ENCODE measurements at regions of chr7 and their contacts with region 1.

Region 1: DNA sequence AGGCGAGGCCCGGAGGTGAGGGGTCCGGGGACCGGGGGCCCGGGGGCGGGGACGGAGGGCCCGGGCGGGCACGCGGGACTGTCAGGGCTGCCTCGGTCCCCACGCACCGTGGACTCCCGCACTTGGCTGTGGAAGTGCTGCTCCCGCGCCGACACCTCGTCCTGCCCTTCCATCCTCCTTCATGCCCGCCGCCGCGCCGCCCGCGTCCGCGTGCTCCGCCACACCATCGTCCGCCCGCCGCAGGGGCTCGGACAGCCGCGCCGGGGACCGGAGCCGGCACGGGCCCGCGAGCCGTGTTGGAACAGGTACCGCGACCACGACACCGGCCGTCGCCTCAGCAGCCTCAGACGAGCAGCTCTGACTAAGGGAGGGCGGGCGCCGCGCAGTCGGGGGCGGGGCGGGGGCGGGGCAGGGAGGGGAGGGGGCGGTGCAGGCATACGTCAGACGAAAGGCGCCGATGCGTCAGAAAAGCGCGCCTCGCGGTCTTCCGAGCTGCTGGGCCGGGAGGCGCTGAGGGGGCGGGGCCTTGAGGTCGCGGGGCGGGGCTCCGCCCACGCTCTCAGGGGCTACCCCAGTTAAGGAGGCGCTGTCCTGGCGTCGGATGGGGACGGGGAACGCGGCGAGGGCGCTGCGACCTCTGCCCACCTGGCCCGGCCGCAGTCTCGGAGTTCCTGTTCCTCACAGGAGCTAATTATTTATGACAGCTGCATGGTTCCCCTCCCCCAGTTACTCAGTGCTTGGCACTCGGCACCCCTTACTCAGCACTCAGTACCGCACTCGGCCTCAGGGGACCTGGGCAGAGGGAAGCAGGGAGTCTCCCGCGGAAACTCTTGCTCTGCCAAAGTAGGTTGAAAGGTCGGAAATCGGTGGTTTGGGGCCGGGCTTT is at the start of gene LMBR1:
- DNase-seq: peak; percentile 98
- ATAC-seq: peak; percentile 86
- H3K4me3 Mint-ChIP-seq: peak within 1 kb of the TSS; percentile 91
- H3K27ac Mint-ChIP-seq: peak within 1 kb of the TSS; percentile 88
- H3K4me1 Mint-ChIP-seq: peaks cover 42% of the 10 kb centered on the region
- H3K27me3 Mint-ChIP-seq: no peaks in the 10 kb centered on the region
- CTCF ChIP-seq: no peak
- total RNA-seq, gene LMBR1: 54.6 and 67.9 TPM in 2 replicates

Region 2: DNA sequence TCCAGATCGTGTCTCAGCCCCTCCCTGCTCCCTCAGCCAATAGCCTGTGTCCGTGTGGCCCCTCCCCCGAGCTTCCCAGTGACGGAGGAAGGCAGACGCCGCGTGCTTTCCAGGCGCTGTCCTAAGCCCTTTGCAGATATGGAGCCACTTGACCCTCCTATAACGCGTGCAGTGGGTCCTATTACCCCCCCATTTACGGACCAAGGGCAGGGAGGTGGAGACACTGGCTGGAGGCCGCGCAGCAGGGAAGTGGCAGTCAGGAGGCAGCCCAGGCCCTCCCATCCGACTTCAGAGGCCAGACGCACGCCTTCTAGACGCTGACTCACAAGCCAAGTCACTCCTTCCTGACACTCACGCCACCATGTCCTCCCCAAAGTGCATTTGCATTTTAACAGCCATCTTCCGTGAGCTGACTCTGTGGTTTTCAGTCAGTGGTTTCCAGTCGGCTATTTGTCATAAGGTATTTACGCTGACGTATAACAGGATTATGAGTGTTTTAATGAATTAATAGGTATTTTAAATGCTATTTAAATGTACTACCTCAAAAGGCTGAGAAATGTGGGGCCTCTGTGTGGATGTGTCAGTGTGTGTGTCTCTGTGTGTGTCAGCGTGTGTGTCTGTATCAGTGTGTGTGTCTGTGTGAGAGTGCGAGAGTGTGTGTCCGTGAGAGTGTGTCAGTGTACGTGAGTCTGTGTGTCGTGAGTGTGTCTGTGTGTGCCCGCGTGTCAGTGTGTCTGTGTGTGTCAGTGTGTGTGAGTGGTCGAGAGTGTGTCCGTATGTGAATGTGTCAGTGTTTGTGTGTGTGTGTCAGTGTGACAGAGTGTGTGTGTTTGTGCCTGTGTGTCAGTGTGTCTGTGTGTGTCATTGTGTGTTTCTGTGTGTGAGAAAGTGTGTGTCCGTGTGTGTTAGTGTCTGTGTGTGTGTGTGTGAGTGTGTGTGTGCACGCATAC is 1687.4 kb before region 1 on chr7:
- CTCF ChIA-PET with region 1: no interaction called
- POLR2A ChIA-PET with region 1: no interaction called
- intact Hi-C with region 1: loop called (anchors 2 kb)
- DNase-seq: peak; percentile 75
- ATAC-seq: peak; percentile 81
- H3K4me3 Mint-ChIP-seq: peak overlapping the region; percentile 82
- H3K27ac Mint-ChIP-seq: peak overlapping the region; percentile 97
- H3K4me1 Mint-ChIP-seq: peaks cover 32% of the 10 kb centered on the region
- H3K27me3 Mint-ChIP-seq: no peaks in the 10 kb centered on the region
- CTCF ChIP-seq: no peak

Region 3: GRCh38 chr7:155644178-155644970 is 1248.7 kb before region 1 on chr7 and contains the start of gene RBM33:
- CTCF ChIA-PET with region 1: no interaction called
- POLR2A ChIA-PET with region 1: interaction called, 6 read pairs
- intact Hi-C with region 1: loop called (anchors 10 kb)
- DNase-seq: peak; percentile 86
- ATAC-seq: peak; percentile 74
- H3K4me3 Mint-ChIP-seq: peak within 1 kb of the TSS; percentile 98
- H3K27ac Mint-ChIP-seq: peak within 1 kb of the TSS; percentile 98
- H3K4me1 Mint-ChIP-seq: peaks cover 47% of the 10 kb centered on the region
- H3K27me3 Mint-ChIP-seq: no peaks in the 10 kb centered on the region
- CTCF ChIP-seq: no peak
- total RNA-seq, gene RBM33: 107 and 117 TPM in 2 replicates

Region 4: DNA sequence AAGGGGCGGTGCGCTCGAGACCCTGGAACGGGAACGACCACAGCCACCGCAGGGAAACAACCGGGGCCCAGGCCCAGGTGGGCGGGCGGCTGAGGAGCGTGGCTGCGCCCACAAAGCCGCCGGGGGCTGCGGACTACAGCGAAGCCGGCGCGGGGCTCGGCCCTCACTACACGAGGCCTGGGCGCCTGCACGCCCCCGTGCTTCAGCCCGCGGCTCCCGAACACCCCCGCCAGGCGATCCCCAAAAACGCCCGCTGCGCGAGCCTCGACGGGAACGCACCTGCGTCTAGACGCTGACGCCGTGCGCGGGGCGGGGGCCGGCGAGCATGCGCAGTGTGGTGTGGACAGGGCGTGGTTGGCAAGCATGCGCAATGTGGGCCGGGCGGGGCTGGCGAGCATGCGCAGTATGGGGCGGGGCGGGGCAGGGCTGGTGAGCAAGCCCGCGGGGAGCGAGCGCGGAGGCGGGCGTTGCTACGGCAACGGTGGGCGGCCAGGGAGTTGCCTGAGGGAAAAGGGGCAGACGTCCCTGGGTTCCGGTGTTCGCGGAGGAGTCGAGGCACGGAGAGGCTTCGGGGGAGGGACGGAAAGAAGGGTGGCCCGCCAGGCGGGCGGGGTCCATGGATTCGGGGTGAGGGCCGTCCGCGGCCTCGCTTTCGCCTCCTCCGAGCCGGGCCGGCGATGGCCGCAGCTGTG is 252.7 kb before region 1 on chr7 and contains the start of gene RNF32:
- CTCF ChIA-PET with region 1: no interaction called
- POLR2A ChIA-PET with region 1: interaction called, 4 read pairs
- intact Hi-C with region 1: loop called (anchors 1 kb)
- DNase-seq: peak; percentile 98
- ATAC-seq: peak; percentile 84
- H3K4me3 Mint-ChIP-seq: peak within 1 kb of the TSS; percentile 92
- H3K27ac Mint-ChIP-seq: peak within 1 kb of the TSS; percentile 96
- H3K4me1 Mint-ChIP-seq: peaks cover 29% of the 10 kb centered on the region
- H3K27me3 Mint-ChIP-seq: no peaks in the 10 kb centered on the region
- CTCF ChIP-seq: no peak
- total RNA-seq, gene RNF32: 1.0 and 2.9 TPM in 2 replicates

Region 5: DNA sequence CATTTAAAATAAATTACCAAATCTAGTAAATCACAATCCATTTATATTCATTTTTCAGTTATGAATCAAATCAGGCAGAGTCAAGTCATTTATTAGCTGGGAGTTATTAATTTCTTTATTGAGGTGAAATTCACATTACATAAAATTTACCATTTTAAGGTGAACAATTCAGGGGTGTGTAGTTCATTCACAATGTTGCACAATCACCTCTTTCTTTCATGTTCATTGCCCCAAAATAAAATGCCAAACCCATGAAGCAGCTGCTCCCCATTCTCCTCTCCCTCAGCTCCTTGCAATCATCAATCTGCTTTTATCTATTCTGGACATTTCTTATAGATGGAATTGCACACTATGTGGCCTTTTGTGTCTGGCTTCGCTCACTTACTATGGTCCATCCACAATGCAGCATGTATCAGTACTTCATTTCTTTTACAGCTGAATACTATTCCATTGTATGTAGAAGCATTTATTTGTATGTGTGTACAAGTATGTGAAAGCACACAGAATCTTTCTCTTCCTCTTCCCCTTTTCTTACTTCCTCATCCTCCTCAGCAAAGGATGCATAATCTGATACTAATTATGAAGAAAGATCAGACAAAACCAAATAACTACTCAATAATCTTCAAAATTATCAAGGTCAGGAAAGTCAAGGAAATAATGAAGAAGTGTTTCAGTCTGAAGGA is 60.7 kb before region 1 on chr7:
- CTCF ChIA-PET with region 1: no interaction called
- POLR2A ChIA-PET with region 1: no interaction called
- intact Hi-C with region 1: loop called (anchors 2 kb)
- DNase-seq: no peak
- ATAC-seq: peak; percentile 47
- H3K4me3 Mint-ChIP-seq: peak overlapping the region; percentile 29
- H3K27ac Mint-ChIP-seq: peak overlapping the region; percentile 77
- H3K4me1 Mint-ChIP-seq: peaks cover 51% of the 10 kb centered on the region
- H3K27me3 Mint-ChIP-seq: no peaks in the 10 kb centered on the region
- CTCF ChIP-seq: no peak

Region 6: GRCh38 chr7:156949541-156950380 is 56.7 kb after region 1 on chr7 and contains the start of gene NOM1:
- CTCF ChIA-PET with region 1: interaction called, 4 read pairs
- POLR2A ChIA-PET with region 1: interaction called, 14 read pairs
- intact Hi-C with region 1: loop called (anchors 1 kb)
- DNase-seq: peak; percentile 95
- ATAC-seq: peak; percentile 94
- H3K4me3 Mint-ChIP-seq: peak within 1 kb of the TSS; percentile 93
- H3K27ac Mint-ChIP-seq: peak within 1 kb of the TSS; percentile 78
- H3K4me1 Mint-ChIP-seq: peaks cover 24% of the 10 kb centered on the region
- H3K27me3 Mint-ChIP-seq: peaks cover 8% of the 10 kb centered on the region
- CTCF ChIP-seq: no peak
- total RNA-seq, gene NOM1: 34.7 and 39.1 TPM in 2 replicates

Measured in activated B cell treated with CpG ODN at 0.5 μM for 24 hours (primary cell).